Colonic mucosa (tissue), 4 donors: ENCODE measurements at regions of chr5 and their contacts with region 1.

Region 1: DNA sequence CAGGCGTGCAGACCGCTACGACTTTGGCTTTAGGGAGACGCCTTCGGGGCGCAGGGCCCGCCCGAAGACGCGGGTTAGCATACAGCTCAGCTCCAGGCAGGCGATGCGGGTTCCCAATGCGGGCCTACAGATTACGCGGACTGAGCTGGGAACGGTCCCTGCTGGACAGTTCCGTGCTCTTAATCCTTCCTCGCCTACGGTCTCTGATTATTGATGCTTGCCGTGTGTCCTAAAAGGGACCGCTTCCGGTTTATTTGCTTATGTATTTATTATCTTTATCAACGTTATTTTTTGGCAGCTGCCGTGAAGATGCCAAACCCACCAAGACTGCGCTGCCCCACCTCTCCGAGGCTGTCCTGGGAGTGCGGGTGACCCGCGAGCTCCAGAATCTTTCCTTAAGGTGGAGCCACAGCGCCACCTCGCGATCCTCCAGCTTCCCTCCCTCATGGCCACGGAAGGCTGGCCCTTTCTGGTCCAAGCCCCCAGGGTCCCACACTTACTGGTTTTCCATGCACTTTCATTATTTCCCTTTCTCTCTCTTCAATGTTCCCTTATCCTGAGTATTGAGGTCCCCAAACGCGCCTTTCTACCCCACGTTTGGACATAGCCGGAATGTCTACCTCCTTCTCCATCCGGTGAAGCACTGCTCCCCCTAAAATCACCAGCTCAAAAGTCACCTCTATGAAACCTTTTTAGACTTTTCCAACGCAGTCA is 7.0 kb upstream of the EBF1 start:
- DNase-seq: peak; percentile 72
- H3K4me3 ChIP-seq: no peak overlapping the region
- H3K27ac ChIP-seq: no peak overlapping the region
- H3K4me1 ChIP-seq: no peaks in the 10 kb centered on the region
- H3K27me3 ChIP-seq: peaks cover 50% of the 10 kb centered on the region
- CTCF ChIP-seq: peak; percentile 72

Region 2: DNA sequence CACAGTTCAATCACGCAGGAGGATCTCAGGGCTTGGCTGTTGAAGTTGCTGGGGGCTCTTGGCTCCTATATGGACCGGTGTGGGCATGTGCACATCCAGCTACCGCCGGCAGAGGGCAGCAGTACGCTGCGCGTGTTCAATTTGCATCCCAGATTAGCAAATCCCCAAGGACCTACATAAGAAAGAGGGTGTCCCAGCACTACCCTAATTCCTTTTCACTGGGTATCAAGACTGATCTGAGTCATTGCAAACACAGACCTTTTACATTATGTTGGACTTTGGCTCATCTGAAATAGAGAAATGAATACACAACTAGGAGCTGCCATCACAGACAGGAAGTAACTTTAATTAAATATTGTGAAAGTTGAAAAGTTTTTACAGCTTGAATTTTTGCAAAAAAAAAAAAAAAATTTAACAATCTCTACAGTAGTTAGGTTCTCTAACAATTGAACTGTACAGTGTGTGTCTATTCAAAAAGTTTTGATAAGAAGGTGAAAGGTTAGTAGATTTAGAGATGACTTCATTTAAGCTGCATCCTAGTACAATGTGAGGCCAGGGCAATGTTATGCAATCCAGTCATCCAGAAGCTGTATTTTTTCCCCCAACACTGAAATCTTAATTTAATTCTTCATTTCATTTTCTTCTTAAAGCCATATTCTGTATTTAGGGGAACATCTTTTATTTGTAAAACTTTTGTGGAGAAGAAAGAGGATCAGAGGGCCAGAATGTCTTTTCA is 411.0 kb before region 1 on chr5:
- intact Hi-C with region 1: loop called (anchors 2 kb)
- DNase-seq: peak; percentile 73
- H3K4me3 ChIP-seq: no peak overlapping the region
- H3K27ac ChIP-seq: no peak overlapping the region
- H3K4me1 ChIP-seq: no peaks in the 10 kb centered on the region
- H3K27me3 ChIP-seq: no peaks in the 10 kb centered on the region
- CTCF ChIP-seq: peak; percentile 91